B cell (primary cell): ENCODE measurements at regions of chr15 and their contacts with region 1.

Region 1: GRCh38 chr15:63994073-63994600 is 52.1 kb downstream of the DAPK2 start:
- DNase-seq: no peak
- ATAC-seq: no peak
- H3K4me3 ChIP-seq: no peak overlapping the region
- H3K4me3 Mint-ChIP-seq: no peak overlapping the region
- H3K27ac ChIP-seq: no peak overlapping the region
- H3K27ac Mint-ChIP-seq: no peak overlapping the region
- H3K4me1 ChIP-seq: peaks cover 37 to 48% of the 10 kb centered on the region in 2 donors
- H3K4me1 Mint-ChIP-seq: peaks cover 61% of the 10 kb centered on the region
- H3K27me3 ChIP-seq: no peaks in the 10 kb centered on the region
- H3K27me3 Mint-ChIP-seq: no peaks in the 10 kb centered on the region
- CTCF ChIP-seq: no peak

Region 2: DNA sequence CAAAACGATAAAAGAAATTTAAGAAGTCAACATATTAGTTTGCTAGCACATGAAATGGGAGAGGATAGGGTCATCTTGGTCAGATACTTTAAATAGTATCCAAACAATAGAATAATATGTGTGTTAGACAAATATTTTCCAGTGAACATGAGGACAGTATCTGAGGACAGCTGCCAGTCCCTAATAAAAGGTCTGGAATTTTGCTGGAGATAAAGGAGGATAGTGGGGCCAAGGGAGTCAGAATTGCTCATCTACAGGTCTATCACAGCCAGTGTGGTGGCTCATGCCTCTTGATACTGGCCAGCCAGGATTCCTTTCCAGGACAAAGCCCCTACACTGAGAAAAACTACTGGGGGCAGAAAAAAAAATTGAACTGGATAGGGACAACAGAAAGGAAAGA is 234.4 kb before region 1 on chr15:
- CTCF ChIA-PET with region 1: no interaction called
- POLR2A ChIA-PET with region 1: no interaction called
- intact Hi-C with region 1: no loop called
- DNase-seq: no peak
- ATAC-seq: no peak
- H3K4me3 ChIP-seq: no peak overlapping the region
- H3K4me3 Mint-ChIP-seq: no peak overlapping the region
- H3K27ac ChIP-seq: no peak overlapping the region
- H3K27ac Mint-ChIP-seq: no peak overlapping the region
- H3K4me1 ChIP-seq: peaks cover 0 to 6% of the 10 kb centered on the region in 2 donors
- H3K4me1 Mint-ChIP-seq: peaks cover 19% of the 10 kb centered on the region
- H3K27me3 ChIP-seq: no peaks in the 10 kb centered on the region
- H3K27me3 Mint-ChIP-seq: no peaks in the 10 kb centered on the region
- CTCF ChIP-seq: no peak

Region 3: DNA sequence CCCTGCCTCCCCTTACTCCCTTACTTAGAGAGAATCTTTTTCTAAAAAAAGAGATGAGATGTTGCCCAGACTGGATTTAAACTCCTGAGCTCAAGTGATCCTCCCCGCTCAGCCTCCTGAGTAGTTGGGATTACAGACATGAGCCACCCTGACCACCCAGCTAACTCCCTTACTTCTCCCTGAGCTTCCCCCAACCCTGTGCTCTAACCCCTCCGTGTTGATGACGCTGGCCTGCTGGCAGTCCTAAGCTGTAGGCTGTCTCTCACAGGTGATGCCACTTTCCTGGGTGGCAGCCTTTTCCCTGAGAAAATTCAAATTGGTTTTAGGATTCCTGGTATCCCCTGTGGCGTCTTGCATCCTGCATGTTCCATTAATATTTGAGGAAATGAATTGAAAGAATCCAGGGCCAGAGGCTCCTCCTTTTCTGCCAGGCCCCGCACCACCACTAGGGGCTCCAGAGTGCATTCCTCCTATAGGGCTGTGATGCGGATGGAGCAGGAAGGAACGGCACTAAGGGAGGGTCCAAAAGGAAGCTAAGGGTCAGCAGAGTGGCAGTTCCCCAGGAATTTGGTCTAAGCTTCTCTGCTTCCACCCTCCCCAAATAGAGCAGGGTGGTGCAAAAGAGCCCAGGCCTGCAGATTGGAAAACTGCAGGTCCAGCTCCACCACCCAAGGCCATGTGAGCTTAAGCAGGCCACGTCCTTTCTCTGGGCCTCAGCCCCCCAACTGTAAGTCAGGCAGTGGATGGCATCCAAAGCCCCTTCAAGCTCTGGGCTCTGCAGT is 48.9 kb before region 1 on chr15:
- CTCF ChIA-PET with region 1: interaction called, 11 read pairs
- POLR2A ChIA-PET with region 1: no interaction called
- intact Hi-C with region 1: no loop called
- DNase-seq: peak; percentile 69
- ATAC-seq: peak; percentile 78
- H3K4me3 ChIP-seq: no peak overlapping the region
- H3K4me3 Mint-ChIP-seq: no peak overlapping the region
- H3K27ac ChIP-seq: no peak overlapping the region
- H3K27ac Mint-ChIP-seq: peak overlapping the region; percentile 23
- H3K4me1 ChIP-seq: peaks cover 13 to 26% of the 10 kb centered on the region in 2 donors
- H3K4me1 Mint-ChIP-seq: peaks cover 25% of the 10 kb centered on the region
- H3K27me3 ChIP-seq: peaks cover 0 to 2% (median 0%) of the 10 kb centered on the region in 4 experiments
- H3K27me3 Mint-ChIP-seq: no peaks in the 10 kb centered on the region
- CTCF ChIP-seq: peak; percentile 98

Region 4: GRCh38 chr15:64216730-64217428 is 222.7 kb after region 1 on chr15:
- CTCF ChIA-PET with region 1: no interaction called
- POLR2A ChIA-PET with region 1: interaction called, 10 read pairs
- intact Hi-C with region 1: no loop called
- DNase-seq: no peak
- ATAC-seq: no peak
- H3K4me3 ChIP-seq: no peak overlapping the region
- H3K4me3 Mint-ChIP-seq: no peak overlapping the region
- H3K27ac ChIP-seq: no peak overlapping the region
- H3K27ac Mint-ChIP-seq: no peak overlapping the region
- H3K4me1 ChIP-seq: no peaks in the 10 kb centered on the region
- H3K4me1 Mint-ChIP-seq: no peaks in the 10 kb centered on the region
- H3K27me3 ChIP-seq: no peaks in the 10 kb centered on the region
- H3K27me3 Mint-ChIP-seq: no peaks in the 10 kb centered on the region
- CTCF ChIP-seq: no peak

Region 5: DNA sequence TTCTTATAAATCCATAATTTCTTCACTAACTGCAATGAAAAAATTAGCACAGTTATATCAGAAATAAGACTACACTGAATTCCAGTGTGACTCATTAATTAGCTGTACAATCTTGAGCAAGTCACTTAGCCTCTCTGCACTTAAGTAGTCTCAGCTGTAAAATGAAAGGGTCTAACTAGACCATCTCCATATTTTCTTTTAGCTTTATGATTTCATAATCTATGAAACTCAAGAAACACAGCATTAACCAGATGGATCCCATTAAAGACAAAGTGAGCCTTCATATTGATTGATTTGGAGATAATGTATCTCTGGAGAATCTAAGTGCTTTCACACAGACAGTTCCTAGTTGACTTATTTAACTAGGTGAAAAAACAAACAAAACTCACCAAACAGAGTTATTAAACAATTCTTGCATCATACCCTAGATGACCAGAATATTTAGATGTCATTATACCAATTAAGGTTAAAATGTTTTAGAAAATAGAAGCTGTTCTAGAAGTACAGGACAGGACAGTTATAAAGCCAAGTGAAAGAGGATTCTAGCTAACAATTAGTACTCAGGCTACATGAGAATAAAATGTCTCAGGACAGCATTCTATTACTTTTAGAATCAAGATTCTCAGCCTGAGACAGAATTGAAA is 350.6 kb after region 1 on chr15:
- CTCF ChIA-PET with region 1: no interaction called
- POLR2A ChIA-PET with region 1: no interaction called
- intact Hi-C with region 1: no loop called
- DNase-seq: no peak
- ATAC-seq: no peak
- H3K4me3 ChIP-seq: no peak overlapping the region
- H3K4me3 Mint-ChIP-seq: no peak overlapping the region
- H3K27ac ChIP-seq: no peak overlapping the region
- H3K27ac Mint-ChIP-seq: no peak overlapping the region
- H3K4me1 ChIP-seq: no peaks in the 10 kb centered on the region
- H3K4me1 Mint-ChIP-seq: peaks cover 10% of the 10 kb centered on the region
- H3K27me3 ChIP-seq: no peaks in the 10 kb centered on the region
- H3K27me3 Mint-ChIP-seq: no peaks in the 10 kb centered on the region
- CTCF ChIP-seq: no peak